ENCODE measurements at regions of chr10 and their contacts with region 1.

Region 1: DNA sequence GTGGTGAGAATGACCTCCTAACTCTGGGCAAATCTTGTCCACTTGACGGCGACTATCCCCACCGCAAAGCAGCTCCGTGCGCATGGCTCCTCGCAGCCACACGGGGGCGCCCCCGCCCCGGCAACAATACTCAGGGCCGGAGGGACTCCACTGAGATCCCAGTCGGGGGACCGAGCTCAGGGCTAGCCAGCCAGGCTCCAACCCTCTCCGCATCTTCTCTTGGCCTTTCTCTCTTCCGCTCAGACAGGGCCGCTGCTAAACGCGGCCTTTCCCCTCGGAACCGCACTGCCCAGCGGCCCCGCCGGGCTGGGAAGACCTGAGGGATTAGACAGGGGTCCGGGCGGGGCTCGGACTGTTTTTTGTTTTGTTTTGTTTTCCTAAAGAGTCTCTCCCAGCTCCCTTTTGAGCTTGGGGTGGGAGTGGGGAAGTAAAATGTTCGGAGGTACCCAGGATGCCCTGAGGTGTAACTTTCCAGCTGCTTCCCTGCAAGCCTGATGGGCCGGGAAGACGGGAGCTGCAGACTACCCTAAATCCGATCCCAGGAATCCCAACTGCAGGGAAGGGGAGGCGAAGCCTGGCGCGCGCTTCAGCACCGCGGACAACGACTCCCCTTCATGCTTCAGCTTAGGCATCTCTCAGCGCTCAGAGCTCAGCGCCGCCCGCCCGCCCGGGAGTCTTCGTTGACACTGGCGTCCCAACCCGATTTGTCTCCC is 2.7 kb downstream of the KCNIP2 start:
- DNase-seq: peak; percentile 63 to 94
- H3K4me3 ChIP-seq: no peak overlapping the region
- CTCF ChIP-seq: no peak
- POLR2A ChIP-seq: no peak

Region 2: DNA sequence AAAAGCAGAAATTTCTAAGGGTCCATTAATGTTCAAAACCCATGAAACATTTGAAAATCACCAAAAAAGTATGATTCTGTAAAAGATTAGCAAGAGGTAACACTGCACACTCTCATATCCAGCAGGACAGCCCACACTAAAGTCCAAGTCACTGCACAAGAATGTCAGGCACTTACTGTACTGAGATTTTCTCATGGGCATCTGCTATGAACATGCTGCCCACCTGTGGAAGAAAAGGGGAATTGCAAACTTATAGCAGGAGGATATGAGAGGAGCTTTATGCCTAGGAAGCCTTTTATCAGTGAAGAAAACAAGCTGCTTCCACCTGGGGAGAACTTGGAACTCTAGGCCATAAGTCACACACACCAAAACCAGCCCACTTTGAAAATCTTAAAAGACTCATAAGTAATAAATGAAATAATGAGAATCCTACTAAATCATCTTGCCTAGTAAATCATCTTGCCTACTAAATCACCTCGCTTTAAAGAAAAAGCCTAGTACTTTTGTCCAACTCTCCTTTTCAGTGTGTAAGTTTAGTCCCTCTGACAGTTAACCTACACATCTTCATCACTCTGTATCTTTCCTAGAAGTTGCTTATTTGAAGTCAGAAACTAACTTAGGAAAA is 169.0 kb after region 1 on chr10:
- intact Hi-C with region 1: loop called (anchors 10 kb)
- DNase-seq: peak in 1 of 2 donors; percentile 65
- H3K4me3 ChIP-seq: no peak overlapping the region
- CTCF ChIP-seq: no peak
- POLR2A ChIP-seq: no peak

Region 3: DNA sequence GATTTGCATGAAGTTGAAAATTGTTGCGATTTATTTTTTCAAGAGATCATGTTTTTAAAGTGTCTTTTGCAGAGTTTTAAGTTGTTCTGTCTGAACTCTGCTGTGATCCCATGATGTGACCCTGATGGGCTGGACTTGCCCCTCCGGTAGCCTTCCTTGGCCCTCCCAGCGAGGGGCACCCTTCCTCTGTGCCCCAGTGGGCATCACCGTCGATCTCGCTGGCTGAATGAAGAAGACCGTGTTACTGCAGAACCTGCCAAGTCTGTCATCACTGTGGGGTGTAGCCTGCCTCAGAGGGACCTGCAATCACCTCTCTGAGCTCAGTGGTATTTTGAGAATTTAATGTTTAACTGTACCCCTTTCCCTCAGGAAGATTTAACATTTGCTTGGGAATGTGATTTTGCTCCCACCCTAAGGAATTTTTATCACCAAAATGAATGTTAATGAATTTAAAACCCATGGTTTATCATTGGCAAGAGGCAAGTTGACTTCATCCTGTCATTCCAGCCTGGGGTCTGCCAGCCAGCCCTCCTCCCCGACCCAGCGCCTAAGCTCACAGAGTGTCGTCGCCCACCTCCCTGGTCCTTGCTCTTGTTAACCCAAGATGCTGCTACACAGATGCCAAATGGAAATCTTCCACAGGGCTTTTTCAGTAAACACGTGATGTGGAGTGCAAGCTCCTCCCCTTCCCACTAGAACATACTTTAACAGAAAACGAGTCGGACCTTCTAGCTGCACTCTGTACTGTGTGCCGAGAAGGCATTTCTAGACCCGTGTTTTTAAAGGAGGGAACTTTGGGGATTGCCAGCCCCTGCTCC is 1236.8 kb after region 1 on chr10:
- intact Hi-C with region 1: no loop called
- DNase-seq: no peak
- H3K4me3 ChIP-seq: no peak overlapping the region
- CTCF ChIP-seq: no peak
- POLR2A ChIP-seq: no peak

Measured in lower leg skin (tissue), 4 donors.